ENCODE measurements at regions of chr11 and their contacts with region 1.

Region 1: DNA sequence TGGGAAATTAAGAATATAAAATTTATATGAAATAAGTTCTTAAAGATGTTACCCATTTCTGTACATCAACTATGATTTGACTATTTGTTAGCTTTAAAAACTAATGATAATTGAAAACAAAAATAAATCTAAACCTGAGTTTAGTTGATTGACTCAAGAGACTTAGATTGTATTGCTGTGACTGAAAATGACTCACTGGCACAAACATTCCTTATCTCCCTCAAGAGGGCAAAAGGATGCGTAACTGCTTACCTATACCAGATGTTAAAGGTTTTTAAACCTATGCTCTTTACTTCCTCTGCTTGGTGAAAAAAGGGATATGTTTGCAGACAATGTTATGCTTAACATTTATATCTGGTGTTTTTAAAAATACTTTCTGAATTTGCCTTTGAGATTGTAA is 30.3 kb downstream of the ATM start:
- DNase-seq: no peak
- ATAC-seq: no peak

Region 2: DNA sequence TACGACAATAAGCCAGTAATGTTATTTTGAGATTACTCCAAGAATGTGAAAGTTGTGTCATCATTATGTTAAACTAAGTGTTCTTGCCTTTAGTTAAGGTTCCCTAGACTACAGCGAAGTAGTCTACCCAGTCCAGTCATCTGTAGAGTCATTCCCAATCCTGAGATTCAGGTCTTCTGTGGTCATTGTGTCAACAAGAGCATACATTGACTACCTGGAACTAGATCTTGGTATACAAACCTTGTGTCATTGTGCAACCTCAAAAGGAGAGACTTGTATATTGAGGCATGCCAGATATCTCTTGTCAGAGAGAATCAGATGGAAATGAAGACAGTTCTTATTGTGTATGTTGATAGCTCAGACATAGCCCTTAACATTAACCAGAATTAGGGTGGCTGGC is 85.6 kb after region 1 on chr11:
- intact Hi-C with region 1: loop called (anchors 10 kb)
- DNase-seq: no peak
- ATAC-seq: no peak

Region 3: DNA sequence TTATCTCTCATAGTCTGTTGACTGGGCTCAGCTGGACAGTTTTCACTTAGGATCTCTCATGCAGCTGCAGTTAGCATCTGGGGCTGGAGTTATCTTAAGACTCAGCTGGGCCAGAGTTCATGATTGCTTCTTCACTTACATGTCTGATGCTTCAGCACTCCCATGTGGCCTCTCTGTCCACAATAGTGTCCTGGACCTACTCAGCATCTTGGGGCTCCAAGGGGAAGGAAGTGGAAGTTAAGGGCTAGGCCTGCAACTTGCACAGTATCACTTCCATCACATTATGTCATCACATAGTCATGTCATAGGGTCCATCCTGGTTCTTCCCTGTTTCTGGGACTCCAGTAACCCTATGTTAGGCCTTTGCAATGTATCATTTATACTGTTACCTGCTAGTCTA is 98.3 kb after region 1 on chr11:
- intact Hi-C with region 1: no loop called
- DNase-seq: no peak
- ATAC-seq: no peak